ENCODE measurements at regions of chr7 and their contacts with region 1.

Region 1: DNA sequence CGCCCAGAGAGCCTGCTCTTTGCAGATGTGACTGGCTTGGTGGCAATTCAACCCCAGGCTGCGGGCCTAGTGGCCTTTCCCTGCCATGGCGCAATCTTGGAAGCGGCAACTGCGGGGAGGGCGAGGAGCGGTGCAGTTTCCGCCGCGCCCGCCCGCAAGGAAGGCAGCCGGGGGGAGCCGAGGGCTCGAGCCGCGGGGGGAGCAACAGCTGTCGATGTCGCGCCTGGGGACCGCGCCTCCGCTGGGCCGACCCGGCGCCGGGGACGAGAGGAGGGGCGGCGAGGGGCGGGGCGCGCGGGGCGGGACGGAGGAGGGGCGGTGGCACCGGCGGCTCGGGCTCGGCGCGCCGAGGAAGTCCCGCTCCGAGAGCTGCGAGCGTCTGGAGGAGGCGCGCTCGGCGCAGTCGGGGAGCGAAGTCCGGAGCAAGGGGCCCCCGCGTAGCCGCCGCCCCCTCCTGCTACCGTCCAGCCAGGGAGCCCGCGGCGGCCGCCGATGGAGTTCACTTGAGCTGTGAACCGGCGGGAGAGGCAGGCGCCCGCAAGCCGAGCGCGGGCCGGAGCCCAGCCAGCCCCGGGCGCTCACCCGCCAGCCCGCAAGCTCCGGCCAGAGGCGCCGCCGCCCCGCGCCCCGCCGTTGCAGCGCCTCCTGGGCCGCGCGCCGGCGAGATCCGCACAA is 438.1 kb upstream of the GALNT17 start:
- DNase-seq: peak; percentile 36
- ATAC-seq: peak; percentile 74
- H3K4me3 Mint-ChIP-seq: peak overlapping the region; percentile 79
- H3K27ac Mint-ChIP-seq: no peak overlapping the region
- H3K4me1 Mint-ChIP-seq: peaks cover 15% of the 10 kb centered on the region
- H3K27me3 Mint-ChIP-seq: peaks cover 21% of the 10 kb centered on the region
- CTCF ChIP-seq: no peak

Region 2: DNA sequence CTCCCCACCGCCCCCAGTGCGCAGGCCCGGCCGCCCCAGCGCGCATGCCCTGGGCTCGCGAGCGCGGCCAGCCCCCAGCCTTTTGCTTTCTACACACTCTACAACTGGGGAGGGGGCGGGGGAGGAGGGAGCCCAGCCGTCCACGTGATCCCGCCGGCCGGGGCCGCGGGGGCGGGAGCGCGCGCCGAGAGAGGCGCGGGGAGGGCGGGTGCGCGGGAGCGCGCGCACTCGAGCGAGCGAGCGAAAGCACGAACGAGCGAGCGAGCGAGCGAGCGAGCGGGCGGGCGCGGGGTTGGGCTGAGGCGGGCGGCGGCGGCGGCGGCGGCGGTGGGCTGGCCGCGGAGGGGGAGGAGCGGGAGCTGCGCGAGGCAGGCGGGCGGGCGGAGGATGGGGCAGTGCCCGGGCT is 1095.7 kb before region 1 on chr7 and contains the start of gene AUTS2:
- CTCF ChIA-PET with region 1: no interaction called
- POLR2A ChIA-PET with region 1: no interaction called
- intact Hi-C with region 1: loop called (anchors 10 kb)
- DNase-seq: peak; percentile 78
- ATAC-seq: peak; percentile 75
- H3K4me3 Mint-ChIP-seq: peak within 1 kb of the TSS; percentile 93
- H3K27ac Mint-ChIP-seq: peak within 1 kb of the TSS; percentile 83
- H3K4me1 Mint-ChIP-seq: peaks cover 16% of the 10 kb centered on the region
- H3K27me3 Mint-ChIP-seq: no peaks in the 10 kb centered on the region
- CTCF ChIP-seq: no peak
- total RNA-seq, gene AUTS2: 13.0 and 15.9 TPM in 2 replicates

Region 3: GRCh38 chr7:69906283-69906995 is 787.4 kb before region 1 on chr7:
- CTCF ChIA-PET with region 1: no interaction called
- POLR2A ChIA-PET with region 1: no interaction called
- intact Hi-C with region 1: loop called (anchors 10 kb)
- DNase-seq: no peak
- ATAC-seq: peak; percentile 94
- H3K4me3 Mint-ChIP-seq: peak overlapping the region; percentile 9
- H3K27ac Mint-ChIP-seq: no peak overlapping the region
- H3K4me1 Mint-ChIP-seq: peaks cover 38% of the 10 kb centered on the region
- H3K27me3 Mint-ChIP-seq: no peaks in the 10 kb centered on the region
- CTCF ChIP-seq: no peak

Region 4: DNA sequence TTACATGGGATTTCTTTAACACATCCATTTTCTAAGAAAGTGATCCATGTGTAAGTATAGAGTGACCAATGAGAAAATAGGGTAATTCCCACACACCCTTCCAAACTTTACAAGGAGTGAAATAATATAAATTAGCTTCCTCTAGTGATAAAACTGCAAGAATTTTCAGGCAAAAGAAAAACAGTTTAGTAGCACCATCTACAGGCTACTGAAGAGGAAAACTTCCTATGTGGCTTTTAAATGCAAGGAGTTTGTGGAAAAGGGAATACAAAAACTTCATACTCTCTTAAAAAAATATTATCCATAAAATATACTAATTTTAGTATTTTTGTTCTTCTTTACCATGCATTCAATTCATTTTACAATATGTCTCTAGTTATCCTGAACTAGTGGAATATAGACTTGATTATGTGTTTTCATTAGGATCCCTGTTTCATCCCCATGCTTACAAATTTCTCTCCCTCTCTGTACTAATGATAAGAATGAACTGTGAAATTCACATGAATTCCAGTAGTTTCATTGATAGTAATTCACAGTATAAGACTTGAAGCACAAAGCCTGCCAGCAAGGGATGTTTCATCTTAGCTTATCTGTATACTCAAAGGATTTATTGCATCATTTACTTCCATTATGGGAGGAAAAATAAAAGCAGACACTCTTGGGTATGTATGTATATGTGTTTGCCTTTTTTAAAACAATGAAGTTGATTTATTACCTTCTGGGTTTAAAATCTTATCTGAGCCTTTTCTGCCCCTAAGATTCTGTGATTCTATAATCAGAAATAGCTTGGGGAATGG is 652.7 kb before region 1 on chr7:
- CTCF ChIA-PET with region 1: interaction called, 7 read pairs
- POLR2A ChIA-PET with region 1: no interaction called
- intact Hi-C with region 1: loop called (anchors 5 kb)
- DNase-seq: no peak
- ATAC-seq: no peak
- H3K4me3 Mint-ChIP-seq: no peak overlapping the region
- H3K27ac Mint-ChIP-seq: no peak overlapping the region
- H3K4me1 Mint-ChIP-seq: peaks cover 6% of the 10 kb centered on the region
- H3K27me3 Mint-ChIP-seq: no peaks in the 10 kb centered on the region
- CTCF ChIP-seq: no peak

Region 5: GRCh38 chr7:70193514-70193913 is 500.3 kb before region 1 on chr7:
- CTCF ChIA-PET with region 1: interaction called, 3 read pairs
- POLR2A ChIA-PET with region 1: no interaction called
- intact Hi-C with region 1: loop called (anchors 1 kb)
- DNase-seq: no peak
- ATAC-seq: no peak
- H3K4me3 Mint-ChIP-seq: no peak overlapping the region
- H3K27ac Mint-ChIP-seq: no peak overlapping the region
- H3K4me1 Mint-ChIP-seq: no peaks in the 10 kb centered on the region
- H3K27me3 Mint-ChIP-seq: no peaks in the 10 kb centered on the region
- CTCF ChIP-seq: no peak

Region 6: GRCh38 chr7:70598976-70599375 is 94.8 kb before region 1 on chr7:
- CTCF ChIA-PET with region 1: no interaction called
- POLR2A ChIA-PET with region 1: no interaction called
- intact Hi-C with region 1: no loop called
- DNase-seq: no peak
- ATAC-seq: no peak
- H3K4me3 Mint-ChIP-seq: no peak overlapping the region
- H3K27ac Mint-ChIP-seq: no peak overlapping the region
- H3K4me1 Mint-ChIP-seq: peaks cover 13% of the 10 kb centered on the region
- H3K27me3 Mint-ChIP-seq: peaks cover 10% of the 10 kb centered on the region
- CTCF ChIP-seq: no peak

Measured in activated B cell treated with CpG ODN at 0.5 μM for 24 hours (primary cell).